ENCODE measurements at regions of chr14 and their contacts with region 1.

Region 1: GRCh38 chr14:70809543-70810244 is 381 bp upstream of the MAP3K9 start:
- DNase-seq: peak; percentile 97 to 100
- H3K4me3 ChIP-seq: peak overlapping the region; percentile 75
- H3K27ac ChIP-seq: peak overlapping the region; percentile 2; the same call in 1 of the 2 replicates
- H3K4me1 ChIP-seq: peaks cover 38% of the 10 kb centered on the region
- H3K27me3 ChIP-seq: no peaks in the 10 kb centered on the region
- CTCF ChIP-seq: no peak

Region 2: DNA sequence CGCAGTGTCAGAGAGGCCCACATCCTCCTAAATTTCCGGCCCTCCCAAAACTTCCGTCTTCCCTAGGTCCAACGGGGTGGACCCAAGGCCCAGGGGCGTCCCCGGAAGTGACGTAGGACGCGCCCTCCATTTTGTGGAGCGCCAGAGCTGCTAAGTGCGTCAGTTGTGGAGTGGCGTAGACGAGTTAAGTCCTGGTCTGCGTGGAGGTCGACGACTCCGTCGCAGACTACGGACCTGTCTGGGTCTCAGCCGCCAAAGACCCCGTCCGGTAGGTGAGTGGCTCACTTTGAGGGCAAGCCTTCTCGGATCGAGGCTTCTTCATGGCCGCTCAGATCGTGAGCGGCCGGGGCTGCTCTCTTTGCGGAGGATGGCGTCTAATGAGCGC is 1042.7 kb before region 1 on chr14 and contains the start of gene SRSF5:
- CTCF ChIA-PET with region 1: no interaction called
- POLR2A ChIA-PET with region 1: no interaction called
- intact Hi-C with region 1: loop called (anchors 5 kb)
- DNase-seq: peak; percentile 93 to 95
- H3K4me3 ChIP-seq: peak within 1 kb of the TSS; percentile 71
- H3K27ac ChIP-seq: peak within 1 kb of the TSS; percentile 97
- H3K4me1 ChIP-seq: peaks cover 23% of the 10 kb centered on the region
- H3K27me3 ChIP-seq: no peaks in the 10 kb centered on the region
- CTCF ChIP-seq: no peak
- total RNA-seq, gene SRSF5: 385 and 395 TPM in 2 replicates

Region 3: DNA sequence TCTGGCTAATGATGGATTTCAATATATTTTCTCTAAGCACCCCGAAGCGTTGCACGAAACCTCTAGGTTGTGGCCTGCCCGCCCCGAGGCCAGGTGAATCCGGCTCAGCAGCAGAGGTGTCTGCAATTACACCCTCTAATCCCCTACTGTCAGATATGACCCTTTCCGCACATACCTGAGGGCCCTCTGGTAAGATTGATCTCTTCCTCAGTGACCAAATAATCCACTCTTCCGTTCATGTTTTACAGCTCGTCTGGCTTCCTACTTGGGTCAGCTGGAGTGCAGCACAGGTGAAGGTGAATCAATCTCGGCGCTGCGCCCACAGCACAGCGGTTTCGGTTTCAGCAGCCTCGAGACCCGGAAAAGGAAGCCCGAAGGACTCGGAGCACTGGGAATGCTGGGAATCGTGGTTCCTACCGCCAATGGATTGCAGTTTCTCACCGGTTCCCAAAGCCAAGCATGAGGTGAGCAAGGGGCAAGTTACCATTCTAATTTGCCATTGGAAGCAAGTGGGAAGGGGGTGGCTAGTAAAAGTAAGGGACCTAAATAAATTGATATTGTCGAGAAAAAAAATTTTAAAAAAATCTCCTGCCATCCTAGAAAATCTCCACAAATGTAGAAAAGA is 392.9 kb before region 1 on chr14 and contains the start of gene SYNJ2BP:
- CTCF ChIA-PET with region 1: no interaction called
- POLR2A ChIA-PET with region 1: no interaction called
- intact Hi-C with region 1: loop called (anchors 10 kb)
- DNase-seq: peak; percentile 80 to 87
- H3K4me3 ChIP-seq: peak within 1 kb of the TSS; percentile 77
- H3K27ac ChIP-seq: peak within 1 kb of the TSS; percentile 71
- H3K4me1 ChIP-seq: peaks cover 15% of the 10 kb centered on the region
- H3K27me3 ChIP-seq: no peaks in the 10 kb centered on the region
- CTCF ChIP-seq: no peak
- total RNA-seq, gene SYNJ2BP: 21.2 and 30.2 TPM in 2 replicates

Region 4: GRCh38 chr14:70622111-70622712 is 187.5 kb before region 1 on chr14:
- CTCF ChIA-PET with region 1: interaction called, 4 read pairs
- POLR2A ChIA-PET with region 1: interaction called, 5 read pairs
- intact Hi-C with region 1: loop called (anchors 1 kb)
- DNase-seq: peak in 1 of 2 experiments; percentile 54
- H3K4me3 ChIP-seq: no peak overlapping the region
- H3K27ac ChIP-seq: no peak overlapping the region
- H3K4me1 ChIP-seq: peaks cover under 1% of the 10 kb centered on the region; the same call in 1 of the 2 replicates
- H3K27me3 ChIP-seq: no peaks in the 10 kb centered on the region
- CTCF ChIP-seq: peak; percentile 94

Region 5: GRCh38 chr14:70665191-70665916 is 144.3 kb before region 1 on chr14:
- CTCF ChIA-PET with region 1: no interaction called
- POLR2A ChIA-PET with region 1: interaction called, 5 read pairs
- intact Hi-C with region 1: loop called (anchors 1 kb)
- DNase-seq: peak; percentile 93 to 96
- H3K4me3 ChIP-seq: peak overlapping the region; percentile 55
- H3K27ac ChIP-seq: peak overlapping the region; percentile 99
- H3K4me1 ChIP-seq: peaks cover 71% of the 10 kb centered on the region
- H3K27me3 ChIP-seq: no peaks in the 10 kb centered on the region
- CTCF ChIP-seq: 0 out of 2 replicates have a peak, but pooled peaks have one; percentile 13

Region 6: DNA sequence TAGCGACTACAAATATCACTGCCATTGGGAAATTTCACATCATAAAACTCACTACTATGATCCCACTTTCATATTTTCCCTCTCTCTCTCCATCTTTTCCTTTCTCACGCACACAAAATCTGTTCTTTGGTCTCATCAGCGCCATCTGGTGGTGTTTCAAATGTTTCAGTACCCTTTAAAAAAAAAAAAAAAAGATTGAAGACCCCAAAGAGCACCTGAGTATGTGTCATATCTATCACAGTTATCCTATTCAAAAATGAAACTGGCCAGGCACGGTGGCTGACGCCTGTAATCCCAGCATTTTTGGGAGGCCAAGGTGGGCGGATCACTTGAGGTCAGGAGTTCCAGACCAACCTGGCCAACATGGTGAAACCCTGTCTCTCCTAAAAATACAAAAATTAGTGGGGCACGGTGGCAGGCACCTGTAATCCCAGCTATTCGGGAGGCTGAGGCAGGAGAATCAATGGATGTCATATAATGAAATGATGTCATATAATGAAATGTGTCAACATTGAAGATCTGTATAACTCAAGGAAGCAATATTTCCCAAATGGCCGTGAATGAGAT is 95.6 kb before region 1 on chr14:
- CTCF ChIA-PET with region 1: interaction called, 5 read pairs
- POLR2A ChIA-PET with region 1: interaction called, 11 read pairs
- intact Hi-C with region 1: loop called (anchors 1 kb)
- DNase-seq: peak; percentile 41 to 55
- H3K4me3 ChIP-seq: no peak overlapping the region
- H3K27ac ChIP-seq: peak overlapping the region; percentile 51; the same call in 1 of the 2 replicates
- H3K4me1 ChIP-seq: peaks cover 22% of the 10 kb centered on the region
- H3K27me3 ChIP-seq: no peaks in the 10 kb centered on the region
- CTCF ChIP-seq: peak; percentile 98

Region 7: DNA sequence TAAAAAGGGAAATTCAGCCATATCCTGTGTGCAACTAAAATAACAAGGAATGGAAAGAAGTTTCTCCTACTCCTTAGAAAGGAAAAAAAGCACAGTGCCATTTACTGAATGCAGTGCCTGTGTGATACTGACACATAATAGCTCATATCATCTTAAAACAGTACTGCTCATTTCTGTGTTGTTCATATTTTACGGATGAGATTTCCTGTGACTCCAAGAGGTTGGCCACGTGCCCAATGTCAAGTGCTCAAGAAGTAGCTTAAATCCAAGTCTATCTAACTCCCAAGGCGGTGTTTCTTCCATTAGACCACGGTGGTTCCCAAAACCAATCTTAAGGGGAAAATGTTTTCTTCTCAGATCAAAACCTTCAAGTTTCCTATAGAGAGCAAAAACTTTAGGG is 20.3 kb before region 1 on chr14:
- CTCF ChIA-PET with region 1: no interaction called
- POLR2A ChIA-PET with region 1: interaction called, 11 read pairs
- intact Hi-C with region 1: no loop called
- DNase-seq: no peak
- H3K4me3 ChIP-seq: no peak overlapping the region
- H3K27ac ChIP-seq: no peak overlapping the region
- H3K4me1 ChIP-seq: no peaks in the 10 kb centered on the region
- H3K27me3 ChIP-seq: no peaks in the 10 kb centered on the region
- CTCF ChIP-seq: no peak

Measured in PC-9 (cell line).